Gastrocnemius medialis (tissue), 4 donors: ENCODE measurements at regions of chr5 and their contacts with region 1.

Region 1: DNA sequence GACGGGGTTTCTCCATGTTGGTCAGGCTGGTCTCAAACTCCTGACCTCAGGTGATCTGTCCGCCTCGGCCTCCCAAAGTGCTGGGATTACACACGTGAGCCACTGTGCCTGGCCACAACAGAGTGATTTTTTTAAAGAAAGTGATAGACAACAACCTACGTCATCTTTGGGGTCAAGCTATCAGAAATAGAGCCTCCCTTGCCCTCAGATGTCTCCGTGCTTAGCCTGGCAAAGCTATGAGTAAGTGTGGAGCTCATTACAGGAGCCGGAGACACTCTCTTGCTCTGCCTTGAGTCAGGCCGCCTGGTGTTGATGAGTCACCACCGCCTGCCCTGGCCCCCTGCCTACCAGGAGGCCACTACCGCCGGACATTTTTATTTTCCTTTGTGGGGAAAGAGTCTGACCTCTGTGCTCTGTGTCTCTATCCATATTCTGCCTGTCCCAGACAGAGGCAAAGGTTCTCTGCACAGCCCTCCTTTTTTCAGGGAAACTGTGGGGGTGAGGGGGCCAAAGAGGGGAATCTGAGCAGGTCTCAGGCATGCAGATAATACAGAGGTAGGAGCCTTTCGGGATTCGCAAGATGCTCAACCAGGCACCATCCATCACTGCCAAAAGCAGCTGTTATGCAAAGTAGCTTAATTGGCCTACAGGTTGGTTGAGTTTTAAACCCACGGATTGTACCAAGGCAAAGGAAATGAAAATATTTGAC is 123.7 kb upstream of the CPEB4 start:
- DNase-seq: peak; percentile 91 to 96
- ATAC-seq: peak; percentile 59 to 65
- H3K4me3 ChIP-seq: no peak overlapping the region
- H3K27ac ChIP-seq: peak overlapping the region; percentile 90 to 95 (median 94)
- H3K4me1 ChIP-seq: peaks cover 57 to 63% of the 10 kb centered on the region in 2 donors
- H3K27me3 ChIP-seq: no peaks in the 10 kb centered on the region
- CTCF ChIP-seq: no peak
- POLR2A ChIP-seq: peak; percentile 8 to 57

Region 2: DNA sequence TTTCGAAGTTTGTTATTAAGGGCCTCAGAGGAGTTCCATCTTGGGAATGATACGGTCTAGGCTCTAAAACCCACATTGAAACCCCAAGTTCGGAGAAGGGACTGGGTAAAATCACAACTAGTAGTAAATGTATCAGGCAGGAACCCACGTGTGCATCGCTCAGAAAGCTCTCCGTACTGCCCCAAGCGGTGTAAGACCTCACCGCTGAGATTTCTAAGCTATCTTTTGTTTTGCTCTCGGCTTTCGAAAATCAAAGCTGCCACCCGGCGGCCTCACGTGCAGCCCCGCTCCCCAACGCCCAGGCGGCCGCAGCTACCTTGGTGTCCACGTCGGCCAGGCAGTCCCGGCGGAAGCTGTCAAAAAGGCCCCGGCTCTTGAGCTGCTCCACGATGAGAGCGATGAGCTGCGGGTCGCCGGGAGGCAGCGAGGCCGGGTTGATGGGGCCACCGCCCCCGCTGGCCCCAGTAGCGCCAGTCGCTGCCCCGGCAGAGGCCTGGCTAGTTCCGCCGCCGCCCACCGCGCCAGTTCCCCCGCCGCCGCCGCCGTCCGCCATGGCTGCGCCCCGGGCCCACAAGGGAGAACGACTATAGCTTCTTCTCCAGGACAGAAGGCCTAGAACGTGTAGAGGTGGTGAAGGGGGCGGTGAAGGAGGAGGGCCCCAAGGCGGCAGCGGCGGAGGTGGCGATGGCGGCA is 148.4 kb before region 1 on chr5:
- in situ Hi-C with region 1: no loop called
- intact Hi-C with region 1: loop called (anchors 5 kb)
- DNase-seq: peak; percentile 35 to 61
- ATAC-seq: peak; percentile 73 to 77
- H3K4me3 ChIP-seq: peak overlapping the region; percentile 75 to 91 (median 88)
- H3K27ac ChIP-seq: peak overlapping the region; percentile 95 to 98 (median 97)
- H3K4me1 ChIP-seq: peaks cover 40 to 49% of the 10 kb centered on the region in 2 donors
- H3K27me3 ChIP-seq: no peaks in the 10 kb centered on the region
- CTCF ChIP-seq: peak; percentile 46 to 81 (median 67)
- POLR2A ChIP-seq: no peak

Region 3: DNA sequence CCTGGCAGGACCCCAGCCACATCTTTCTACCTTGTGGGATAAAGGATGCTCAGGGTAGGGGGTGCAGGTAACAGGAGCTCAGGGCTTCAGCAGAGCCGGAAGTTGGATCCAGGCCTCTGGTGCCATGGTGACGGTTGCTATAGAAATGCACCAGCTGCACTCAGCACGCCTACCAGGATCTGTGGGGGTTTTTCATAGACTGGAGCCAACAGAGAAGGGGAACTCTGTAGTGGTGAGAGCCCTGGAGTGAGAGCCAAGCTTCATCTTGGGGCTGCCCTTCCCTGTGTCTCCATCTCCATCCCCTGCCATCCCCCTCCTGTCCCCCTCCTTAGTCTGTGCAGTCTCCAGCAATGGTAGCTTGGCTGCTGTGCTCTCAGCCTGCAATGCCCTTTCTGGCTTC is 120.5 kb before region 1 on chr5:
- in situ Hi-C with region 1: no loop called
- intact Hi-C with region 1: no loop called
- DNase-seq: no peak
- ATAC-seq: no peak
- H3K4me3 ChIP-seq: no peak overlapping the region
- H3K27ac ChIP-seq: no peak overlapping the region
- H3K4me1 ChIP-seq: peaks cover 3 to 9% of the 10 kb centered on the region in 2 donors
- H3K27me3 ChIP-seq: no peaks in the 10 kb centered on the region
- CTCF ChIP-seq: no peak
- POLR2A ChIP-seq: no peak

Region 4: DNA sequence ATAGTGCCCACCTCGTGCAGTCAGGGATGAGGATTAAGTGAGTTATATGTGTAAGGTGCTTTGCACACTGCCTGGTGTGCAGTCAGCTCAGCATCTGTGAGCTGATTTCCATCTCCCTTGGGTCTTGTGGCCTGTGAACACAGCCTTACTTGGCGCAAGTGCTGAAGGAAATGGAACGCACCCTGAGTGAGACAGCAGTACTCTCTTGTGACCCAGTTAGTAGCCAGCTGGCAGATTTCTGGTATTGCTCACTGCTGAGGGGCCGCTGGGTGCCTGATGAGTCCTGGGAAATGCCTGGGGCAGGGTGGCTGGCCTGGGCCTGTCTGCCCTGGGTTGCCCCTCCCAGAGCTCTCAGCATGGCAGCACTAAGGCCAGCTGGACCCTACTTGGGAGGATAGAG is 57.1 kb before region 1 on chr5:
- in situ Hi-C with region 1: no loop called
- intact Hi-C with region 1: loop called (anchors 5 kb)
- DNase-seq: peak; percentile 93 to 97
- ATAC-seq: peak; percentile 98 to 99
- H3K4me3 ChIP-seq: no peak overlapping the region
- H3K27ac ChIP-seq: peak overlapping the region; percentile 78 to 86 (median 84)
- H3K4me1 ChIP-seq: peaks cover 16 to 19% of the 10 kb centered on the region in 2 donors
- H3K27me3 ChIP-seq: no peaks in the 10 kb centered on the region
- CTCF ChIP-seq: no peak
- POLR2A ChIP-seq: peak; percentile 15 to 37

Region 5: DNA sequence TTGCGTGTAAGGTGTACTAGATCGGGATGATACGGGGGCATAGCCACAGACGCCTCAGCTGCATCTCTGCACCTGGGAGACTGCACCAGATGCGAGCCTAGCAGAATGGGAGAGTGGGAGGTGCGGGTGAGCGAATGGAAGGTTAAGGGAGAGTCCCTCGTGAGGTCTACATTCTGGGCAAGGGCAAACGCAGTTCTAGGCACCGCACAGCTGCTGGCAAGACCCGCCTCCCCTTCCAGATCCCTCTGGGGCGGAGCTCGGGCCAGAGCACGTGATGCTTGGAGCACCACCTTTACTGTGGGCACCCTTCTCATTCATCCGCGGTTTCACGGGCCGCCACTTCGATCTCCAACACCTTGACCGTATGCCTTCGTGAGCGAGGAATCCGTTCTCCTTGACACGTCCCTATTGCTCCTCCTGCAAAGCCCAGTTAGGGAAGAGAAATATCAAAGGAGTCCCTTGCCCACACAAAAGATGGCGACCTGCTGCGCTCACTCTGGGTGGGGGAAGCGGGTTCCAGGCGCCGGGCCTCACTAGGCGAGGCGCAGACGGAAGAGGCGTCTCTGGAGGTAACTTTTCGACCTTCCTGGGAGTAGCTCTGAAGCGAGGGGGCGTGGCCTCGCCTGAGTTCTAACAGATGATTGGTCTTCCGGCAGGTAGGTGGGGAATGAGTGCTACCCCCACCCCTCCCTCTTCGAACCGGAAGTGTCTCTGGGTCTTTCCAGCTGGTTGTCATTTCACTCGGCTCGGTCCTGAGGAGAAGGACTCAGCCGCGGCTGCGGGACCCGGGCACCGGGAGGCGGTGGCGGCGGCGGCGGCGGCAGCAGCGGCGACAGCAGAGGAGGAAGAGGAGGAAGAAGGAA is 123.4 kb after region 1 on chr5 and contains the start of gene CPEB4:
- in situ Hi-C with region 1: loop called in 1 of 4 experiments (anchors 5 kb)
- intact Hi-C with region 1: loop called (anchors 2 kb)
- DNase-seq: peak; percentile 99 to 100
- ATAC-seq: peak; percentile 92 to 94
- H3K4me3 ChIP-seq: peak within 1 kb of the TSS; percentile 79 to 90 (median 88)
- H3K27ac ChIP-seq: peak within 1 kb of the TSS; percentile 94 to 99 (median 96)
- H3K4me1 ChIP-seq: peaks cover 0 to 14% of the 10 kb centered on the region in 2 donors
- H3K27me3 ChIP-seq: no peaks in the 10 kb centered on the region
- CTCF ChIP-seq: no peak
- POLR2A ChIP-seq: peak; percentile 99 to 100
- total RNA-seq, gene CPEB4: 97.8 to 109 (median 102) TPM